A673 (cell line): ENCODE measurements at regions of chr11 and their contacts with region 1.

Region 1: DNA sequence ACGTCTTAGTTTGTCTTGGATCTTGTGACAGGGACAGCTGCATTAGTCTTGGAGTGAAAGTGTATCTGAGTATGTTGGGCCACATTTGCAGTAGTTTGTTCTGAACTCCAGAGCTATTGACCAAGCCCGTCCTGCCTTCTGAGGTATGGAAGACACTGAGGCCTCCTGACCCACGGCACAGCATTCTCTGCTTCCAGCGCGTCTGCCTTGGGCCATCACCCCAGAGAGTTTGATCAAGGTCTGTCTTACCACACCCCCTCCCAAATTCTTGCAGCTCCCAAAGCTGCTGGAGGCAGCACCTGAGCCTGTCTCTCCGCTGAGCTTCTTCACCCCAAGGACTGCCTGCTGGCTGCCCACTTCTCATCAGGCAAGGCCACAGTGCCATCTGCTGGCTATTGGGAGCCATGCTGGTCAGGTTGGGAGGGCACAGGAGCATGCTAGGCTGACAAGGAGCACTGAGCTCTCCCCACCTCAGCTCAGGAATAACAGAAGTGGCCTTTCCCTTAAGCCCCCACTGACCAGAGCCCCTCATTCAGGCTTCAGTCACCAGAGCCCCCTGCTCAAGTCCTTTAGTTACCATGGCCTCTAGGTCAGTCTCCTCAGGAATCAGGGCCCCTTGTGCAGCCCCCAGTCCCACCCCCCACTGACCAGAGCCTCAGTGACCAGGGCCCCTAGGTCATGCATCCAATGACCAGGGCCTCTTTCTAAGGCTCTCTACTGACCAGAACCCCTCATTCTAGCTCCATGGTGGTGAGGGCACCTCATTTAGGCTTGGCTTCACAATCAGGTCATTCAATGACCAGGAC is 27.2 kb upstream of the SMPD1 start:
- DNase-seq: peak; percentile 85
- H3K4me3 ChIP-seq: no peak overlapping the region
- H3K27ac ChIP-seq: no peak overlapping the region
- H3K4me1 ChIP-seq: no peaks in the 10 kb centered on the region
- H3K27me3 ChIP-seq: no peaks in the 10 kb centered on the region
- CTCF ChIP-seq: peak; percentile 86

Region 2: DNA sequence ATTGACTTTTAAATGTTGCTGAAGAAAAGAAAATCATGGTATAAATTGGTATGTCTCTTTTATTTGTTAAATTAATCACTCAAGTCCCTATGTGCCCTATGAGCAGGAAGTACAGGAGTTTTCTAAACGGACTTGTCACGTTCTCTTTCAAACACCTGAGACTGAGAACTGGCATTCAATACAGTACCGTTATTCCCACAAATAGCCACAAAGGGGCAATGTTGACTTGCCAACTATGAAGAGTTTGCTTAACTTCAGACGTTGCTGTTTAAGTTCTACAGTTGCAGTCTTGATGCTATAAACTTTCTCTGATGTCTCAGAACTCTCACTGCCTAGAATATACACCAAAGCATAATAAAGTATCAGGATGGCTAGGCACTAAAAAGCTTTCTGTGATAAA is 340.1 kb before region 1 on chr11:
- CTCF ChIA-PET with region 1: interaction called, 11 read pairs
- POLR2A ChIA-PET with region 1: no interaction called
- intact Hi-C with region 1: loop called (anchors 2 kb)
- DNase-seq: peak; percentile 40
- H3K4me3 ChIP-seq: no peak overlapping the region
- H3K27ac ChIP-seq: no peak overlapping the region
- H3K4me1 ChIP-seq: no peaks in the 10 kb centered on the region
- H3K27me3 ChIP-seq: peaks cover 5% of the 10 kb centered on the region
- CTCF ChIP-seq: peak; percentile 58

Region 3: DNA sequence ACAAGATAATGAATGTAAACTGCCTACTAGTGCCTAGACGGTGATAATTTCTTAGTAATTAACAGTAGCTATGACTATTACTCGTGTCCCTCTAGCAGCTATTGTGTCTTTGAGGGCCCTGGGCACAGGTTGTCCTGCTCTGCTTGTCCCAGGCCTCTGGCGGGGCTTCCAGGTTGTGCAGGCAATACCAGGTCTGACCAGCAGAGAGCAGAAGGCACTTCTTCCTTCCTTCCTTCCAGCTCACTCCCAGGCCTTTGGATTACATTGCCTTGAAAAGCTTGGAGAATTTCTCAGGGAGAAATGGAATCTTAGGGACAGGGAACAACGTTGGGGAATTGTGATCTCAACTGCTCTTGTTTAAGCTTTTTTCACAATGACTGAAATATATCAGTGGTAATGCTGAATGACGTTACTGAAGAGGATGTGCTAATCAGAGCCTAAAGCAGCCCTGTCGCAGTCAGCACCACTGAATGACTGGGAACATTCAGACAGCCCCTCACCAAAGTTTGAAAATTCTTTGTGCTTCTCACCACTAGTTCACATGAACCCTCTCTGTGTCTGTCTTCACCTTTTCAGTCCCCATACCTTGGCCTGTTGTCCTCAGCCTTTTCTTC is 111.8 kb before region 1 on chr11:
- CTCF ChIA-PET with region 1: interaction called, 25 read pairs
- POLR2A ChIA-PET with region 1: no interaction called
- intact Hi-C with region 1: no loop called
- DNase-seq: peak; percentile 71
- H3K4me3 ChIP-seq: no peak overlapping the region
- H3K27ac ChIP-seq: no peak overlapping the region
- H3K4me1 ChIP-seq: no peaks in the 10 kb centered on the region
- H3K27me3 ChIP-seq: peaks cover 8% of the 10 kb centered on the region
- CTCF ChIP-seq: peak; percentile 78

Region 4: GRCh38 chr11:6298605-6299004 is 64.5 kb before region 1 on chr11:
- CTCF ChIA-PET with region 1: interaction called, 9 read pairs
- POLR2A ChIA-PET with region 1: no interaction called
- intact Hi-C with region 1: loop called (anchors 5 kb)
- DNase-seq: no peak
- H3K4me3 ChIP-seq: no peak overlapping the region
- H3K27ac ChIP-seq: no peak overlapping the region
- H3K4me1 ChIP-seq: no peaks in the 10 kb centered on the region
- H3K27me3 ChIP-seq: no peaks in the 10 kb centered on the region
- CTCF ChIP-seq: peak; percentile 22; the same call in 1 of the 2 replicates

Region 5: GRCh38 chr11:6307876-6308275 is 55.2 kb before region 1 on chr11:
- CTCF ChIA-PET with region 1: interaction called, 11 read pairs
- POLR2A ChIA-PET with region 1: no interaction called
- intact Hi-C with region 1: no loop called
- DNase-seq: no peak
- H3K4me3 ChIP-seq: no peak overlapping the region
- H3K27ac ChIP-seq: no peak overlapping the region
- H3K4me1 ChIP-seq: no peaks in the 10 kb centered on the region
- H3K27me3 ChIP-seq: no peaks in the 10 kb centered on the region
- CTCF ChIP-seq: no peak